Right ventricle myocardium inferior (tissue), 1 donor: ENCODE measurements at regions of chr1 and their contacts with region 1.

Region 1: DNA sequence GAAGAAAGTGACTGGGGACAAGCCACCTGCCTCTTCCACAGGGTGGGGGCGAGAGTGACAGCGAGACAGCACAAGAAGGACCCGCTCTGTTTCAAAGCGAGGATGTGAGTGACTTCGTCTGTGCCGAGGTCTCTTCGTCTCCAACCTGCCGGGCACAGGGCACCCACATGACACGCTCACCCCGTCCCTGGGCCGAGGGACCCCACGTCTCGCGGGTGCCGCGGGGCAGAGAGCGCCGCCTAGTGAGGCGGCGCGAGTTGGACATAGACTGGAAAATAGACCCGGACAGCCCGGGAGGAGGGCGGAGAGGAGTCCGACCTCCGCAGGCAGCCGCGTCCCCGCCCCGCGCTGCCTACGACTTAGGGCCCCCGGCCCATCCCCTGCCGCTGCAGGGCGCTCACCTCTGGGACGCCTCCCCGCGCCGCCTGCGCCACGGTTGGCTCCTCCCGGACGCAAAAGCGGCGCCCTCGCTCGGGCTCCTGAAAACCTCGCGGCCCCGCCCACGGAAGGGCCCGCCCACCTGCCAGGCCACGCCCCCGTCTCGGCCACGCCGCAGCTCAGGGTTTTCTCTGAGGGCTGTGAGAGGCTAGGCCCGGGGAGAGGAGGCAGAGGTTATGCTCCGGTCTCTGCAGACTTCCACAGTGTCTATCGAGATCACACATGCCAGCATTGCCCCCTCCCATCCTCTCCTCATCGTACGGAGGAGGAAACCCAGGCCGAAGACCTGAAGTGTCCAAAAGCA is at the start of gene TLR5:
- DNase-seq: peak; percentile 96
- ATAC-seq: peak; percentile 96
- total RNA-seq, gene TLR5: 3.1 TPM

Region 2: DNA sequence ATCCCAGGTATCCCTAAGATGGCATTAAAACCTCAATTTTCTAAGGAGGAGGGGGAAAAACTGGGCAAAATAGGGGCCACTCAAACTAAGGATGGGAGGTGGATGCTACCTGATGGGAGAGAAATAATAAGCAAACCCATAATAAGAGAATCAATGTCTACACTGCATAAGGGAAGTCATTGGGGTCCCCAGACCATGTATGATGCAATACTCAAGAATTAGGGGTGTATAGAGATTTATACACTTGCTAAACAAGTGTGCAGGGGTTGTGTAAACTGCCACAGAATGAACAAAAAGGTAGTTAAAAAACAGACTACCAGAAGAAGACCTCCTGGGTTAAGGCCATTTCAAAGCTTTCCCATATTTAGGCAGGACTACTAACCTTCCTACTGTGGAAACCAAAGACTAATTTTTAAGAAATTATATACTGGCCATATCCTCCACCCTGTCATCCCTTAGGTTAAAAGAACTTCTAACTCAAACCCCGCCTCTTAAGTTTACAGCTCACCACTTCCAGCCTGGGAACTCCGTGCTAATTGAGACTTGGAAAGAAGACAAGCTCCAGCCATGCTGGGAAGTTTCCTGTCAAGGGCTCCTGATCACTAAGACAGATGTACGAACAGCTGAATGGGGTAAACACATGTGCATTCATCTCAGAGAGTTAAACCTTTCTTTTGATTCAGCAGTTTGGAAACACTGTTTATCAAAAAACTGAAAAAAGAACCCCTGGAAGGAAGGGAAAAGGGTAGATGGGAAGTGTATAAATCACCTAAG is 64.5 kb after region 1 on chr1:
- intact Hi-C with region 1: loop called (anchors 10 kb)
- DNase-seq: no peak
- ATAC-seq: peak; percentile 42

Region 3: DNA sequence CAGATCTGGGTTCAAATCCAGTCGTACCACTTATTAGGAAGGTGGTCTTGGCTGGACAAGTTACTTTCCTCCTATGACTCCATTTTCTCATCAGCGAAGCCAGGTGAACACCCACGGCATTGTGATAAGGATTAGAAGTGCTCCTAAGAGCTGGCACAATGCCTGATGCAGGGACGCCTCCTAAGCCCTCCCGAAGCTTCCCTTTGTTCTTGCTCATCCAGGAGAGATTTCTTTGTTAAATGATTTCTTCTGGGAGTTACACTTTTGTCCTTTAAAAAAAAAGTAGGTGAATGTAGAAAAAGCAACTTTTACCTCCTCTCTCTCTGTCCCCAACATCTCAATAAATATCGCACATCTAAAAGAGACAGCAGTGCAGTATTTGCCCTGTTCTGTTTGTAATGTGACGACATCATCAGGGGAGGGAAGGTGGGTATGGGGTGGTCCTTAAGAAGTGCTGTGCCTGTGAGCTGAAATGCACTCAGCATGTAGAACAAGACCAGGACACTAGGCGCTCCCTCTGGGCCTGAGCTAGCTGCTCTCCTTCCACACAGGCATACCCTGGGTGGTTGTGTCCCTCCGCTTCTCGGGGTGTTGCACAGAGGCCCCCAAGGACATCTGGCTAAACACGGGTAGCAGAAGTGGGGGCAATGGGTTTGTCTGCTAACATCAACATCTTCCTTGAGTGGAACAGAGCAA is 177.1 kb after region 1 on chr1:
- intact Hi-C with region 1: no loop called
- DNase-seq: no peak
- ATAC-seq: no peak

Region 4: GRCh38 chr1:223341121-223341520 is 198.2 kb after region 1 on chr1:
- intact Hi-C with region 1: loop called (anchors 5 kb)
- DNase-seq: no peak
- ATAC-seq: peak; percentile 80